ENCODE measurements at regions of chr15 and their contacts with region 1.

Region 1: GRCh38 chr15:44861439-44861910 is 95.0 kb upstream of the TERB2 start:
- ATAC-seq: no peak
- H3K4me3 ChIP-seq: no peak overlapping the region
- H3K27ac ChIP-seq: no peak overlapping the region
- H3K4me1 ChIP-seq: no peaks in the 10 kb centered on the region

Region 2: DNA sequence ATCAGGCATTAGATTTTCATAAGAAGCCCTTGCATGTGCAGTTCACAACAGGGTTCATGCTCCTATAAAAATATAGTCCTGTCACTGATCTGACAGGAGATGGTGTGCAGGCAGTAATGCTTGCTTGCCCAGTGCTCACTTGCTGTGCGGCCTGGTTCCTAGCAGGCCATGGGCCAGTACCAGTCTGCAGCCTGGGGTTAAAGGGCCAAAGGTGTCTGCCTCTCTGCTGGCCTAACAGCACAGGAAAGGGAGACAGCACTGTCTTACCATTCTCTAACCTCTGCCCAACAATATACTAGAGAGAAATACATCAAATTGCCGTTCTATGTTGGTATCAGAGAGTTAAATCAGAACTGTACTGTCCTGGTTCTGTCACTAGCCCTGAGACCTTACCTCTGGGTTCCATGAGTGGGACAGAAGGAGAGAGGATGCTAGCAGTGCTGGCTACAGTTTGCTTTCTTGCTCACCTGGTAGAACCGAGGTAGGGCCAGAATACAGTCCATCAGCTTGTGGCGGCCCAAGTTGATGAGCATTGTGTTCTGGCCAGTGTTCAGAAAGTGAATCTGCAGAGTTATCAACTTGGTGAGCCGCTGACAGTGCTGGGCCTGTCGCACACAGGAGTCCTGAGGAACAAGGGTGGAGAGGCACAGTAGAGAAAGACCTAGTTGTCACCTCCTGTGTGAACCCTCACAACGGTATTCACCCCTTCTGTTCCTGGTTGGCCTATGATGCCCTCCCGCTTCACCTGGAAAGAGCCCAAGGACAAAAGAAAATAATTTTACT is 295.9 kb before region 1 on chr15:
- in situ Hi-C with region 1: no loop called
- ATAC-seq: no peak
- H3K4me3 ChIP-seq: no peak overlapping the region
- H3K27ac ChIP-seq: no peak overlapping the region
- H3K4me1 ChIP-seq: no peaks in the 10 kb centered on the region

Region 3: DNA sequence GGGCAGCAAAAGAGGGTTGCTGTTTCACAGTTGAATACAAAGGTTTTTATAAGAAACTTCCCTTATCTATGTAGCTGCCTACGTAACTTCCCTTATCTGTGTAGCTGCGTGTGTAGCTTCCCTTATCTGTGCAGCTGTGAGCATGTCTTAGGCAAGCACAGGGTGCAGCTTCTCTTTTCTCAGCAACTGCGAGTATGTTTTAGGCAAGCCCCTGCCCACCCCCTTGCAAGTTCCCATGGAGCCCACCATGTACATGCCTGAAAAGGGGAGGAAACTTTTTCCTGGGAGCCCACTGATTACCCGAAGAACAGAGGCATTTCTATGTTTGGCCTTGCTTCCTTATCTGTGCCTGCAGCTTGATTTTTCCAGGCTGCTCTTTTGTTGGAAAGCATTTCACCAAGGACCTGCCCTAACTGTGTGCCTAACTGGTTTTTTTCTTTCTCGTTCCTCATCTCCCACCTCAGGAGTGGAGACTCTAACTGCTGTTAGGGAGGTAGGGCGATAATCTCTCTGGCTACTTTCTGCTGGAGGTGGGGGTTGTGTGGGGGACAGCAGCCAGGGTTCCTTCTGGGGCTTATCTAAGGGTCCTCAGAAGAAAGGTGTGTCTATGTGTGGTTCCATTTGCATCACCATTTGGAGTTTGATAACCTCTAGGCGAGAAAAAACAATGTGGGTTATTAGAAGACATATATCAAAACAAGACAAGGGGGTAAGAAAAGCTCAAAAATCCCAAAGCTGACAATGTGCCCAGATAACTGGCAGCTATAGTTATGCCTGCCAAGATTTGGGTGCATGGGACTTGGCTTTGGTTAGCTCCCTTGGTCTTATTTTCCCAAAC is 187.5 kb after region 1 on chr15:
- in situ Hi-C with region 1: loop called in 1 of 9 experiments (anchors 25 kb)
- ATAC-seq: no peak
- H3K4me3 ChIP-seq: no peak overlapping the region
- H3K27ac ChIP-seq: no peak overlapping the region
- H3K4me1 ChIP-seq: no peaks in the 10 kb centered on the region

Measured in motor neuron (in vitro differentiated cells).